Right cardiac atrium (tissue), 5 donors: ENCODE measurements at regions of chr9 and their contacts with region 1.

Region 1: GRCh38 chr9:111870774-111871498 is 25.7 kb upstream of the UGCG start:
- DNase-seq: no peak
- ATAC-seq: no peak
- H3K4me3 ChIP-seq: no peak overlapping the region
- H3K27ac ChIP-seq: no peak overlapping the region
- H3K4me1 ChIP-seq: no peaks in the 10 kb centered on the region
- H3K27me3 ChIP-seq: no peaks in the 10 kb centered on the region

Region 2: GRCh38 chr9:111815277-111816070 is 55.5 kb before region 1 on chr9:
- intact Hi-C with region 1: loop called in 1 of 4 experiments (anchors 10 kb)
- DNase-seq: no peak
- ATAC-seq: no peak
- H3K4me3 ChIP-seq: no peak overlapping the region
- H3K27ac ChIP-seq: no peak overlapping the region
- H3K4me1 ChIP-seq: no peaks in the 10 kb centered on the region
- H3K27me3 ChIP-seq: no peaks in the 10 kb centered on the region